H1 (cell line): ENCODE measurements at regions of chr20 and their contacts with region 1.

Region 1: GRCh38 chr20:2451939-2452732 is 18.5 kb downstream of the SNRPB start:
- DNase-seq: peak in 1 of 2 experiments; percentile 94
- H3K4me3 ChIP-seq: no peak overlapping the region
- H3K27ac ChIP-seq: no peak overlapping the region
- H3K4me1 ChIP-seq: peaks cover 0 to under 1% (median 0%) of the 10 kb centered on the region in 4 experiments; a peak in 1 of 7 replicates
- H3K27me3 ChIP-seq: no peaks in the 10 kb centered on the region
- CTCF ChIP-seq: peak; percentile 73 to 94 (median 93)
- EP300 ChIP-seq: no peak
- POLR2A ChIP-seq: no peak
- RAD21 ChIP-seq: peak; percentile 89 to 90

Region 2: DNA sequence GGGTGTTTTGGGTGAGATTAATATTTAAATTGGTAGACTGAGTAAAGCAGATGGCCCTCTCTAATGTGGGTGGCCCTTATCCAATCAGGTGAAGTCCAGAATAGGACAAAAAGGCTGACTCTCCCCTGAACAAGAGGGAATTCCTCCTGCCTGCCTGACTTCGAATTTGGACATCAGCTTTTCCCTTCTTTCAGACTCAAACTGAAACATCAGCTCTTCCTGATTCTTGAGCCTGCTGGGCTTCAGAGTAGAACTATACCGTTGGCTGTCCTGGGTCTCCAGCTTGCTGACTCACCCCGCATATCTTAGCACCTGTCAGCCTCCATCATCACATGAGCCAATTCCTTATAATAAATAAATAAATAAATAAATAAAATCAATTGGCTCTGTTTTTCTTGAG is 86.5 kb before region 1 on chr20:
- CTCF ChIA-PET with region 1: interaction called, 10 read pairs
- POLR2A ChIA-PET with region 1: no interaction called
- DNase-seq: no peak
- H3K4me3 ChIP-seq: no peak overlapping the region
- H3K27ac ChIP-seq: no peak overlapping the region
- H3K4me1 ChIP-seq: no peaks in the 10 kb centered on the region
- H3K27me3 ChIP-seq: no peaks in the 10 kb centered on the region; a peak in 1 of 7 replicates
- CTCF ChIP-seq: no peak
- EP300 ChIP-seq: no peak
- POLR2A ChIP-seq: no peak
- RAD21 ChIP-seq: no peak

Region 3: GRCh38 chr20:2387180-2387577 is 65.0 kb before region 1 on chr20:
- CTCF ChIA-PET with region 1: interaction called, 74 read pairs
- POLR2A ChIA-PET with region 1: interaction called, 4 read pairs
- DNase-seq: peak; percentile 47 to 86
- H3K4me3 ChIP-seq: no peak overlapping the region
- H3K27ac ChIP-seq: no peak overlapping the region
- H3K4me1 ChIP-seq: no peaks in the 10 kb centered on the region
- H3K27me3 ChIP-seq: no peaks in the 10 kb centered on the region; a peak in 2 of 7 replicates
- CTCF ChIP-seq: peak; percentile 85 to 92 (median 86)
- EP300 ChIP-seq: no peak
- POLR2A ChIP-seq: no peak
- RAD21 ChIP-seq: peak; percentile 70 to 80

Region 4: GRCh38 chr20:2429061-2429460 is 23.1 kb before region 1 on chr20:
- CTCF ChIA-PET with region 1: interaction called, 17 read pairs
- POLR2A ChIA-PET with region 1: no interaction called
- DNase-seq: no peak
- H3K4me3 ChIP-seq: no peak overlapping the region
- H3K27ac ChIP-seq: no peak overlapping the region
- H3K4me1 ChIP-seq: no peaks in the 10 kb centered on the region
- H3K27me3 ChIP-seq: no peaks in the 10 kb centered on the region
- CTCF ChIP-seq: no peak
- EP300 ChIP-seq: no peak
- POLR2A ChIP-seq: no peak
- RAD21 ChIP-seq: no peak

Region 5: GRCh38 chr20:2470423-2471193 is 18.5 kb after region 1 on chr20 and contains the start of gene SNRPB:
- CTCF ChIA-PET with region 1: interaction called, 11 read pairs
- POLR2A ChIA-PET with region 1: interaction called, 119 read pairs
- DNase-seq: peak; percentile 93 to 96
- H3K4me3 ChIP-seq: peak within 1 kb of the TSS; percentile 91 to 99 (median 98)
- H3K27ac ChIP-seq: peak within 1 kb of the TSS; percentile 98
- H3K4me1 ChIP-seq: peaks cover 0 to 7% (median 2%) of the 10 kb centered on the region in 4 experiments; a peak in 3 of 7 replicates
- H3K27me3 ChIP-seq: no peaks in the 10 kb centered on the region
- CTCF ChIP-seq: no peak
- EP300 ChIP-seq: peak in 1 of 2 experiments; percentile 62; a peak in 1 of 3 replicates
- POLR2A ChIP-seq: peak; percentile 95 to 99
- RAD21 ChIP-seq: no peak
- total RNA-seq, gene SNRPB: 495 and 507 TPM in 2 replicates